ENCODE measurements at regions of chr7 and their contacts with region 1.

Region 1: GRCh38 chr7:55629051-55629677 is 56.9 kb upstream of the VOPP1 start:
- H3K4me3 ChIP-seq: no peak overlapping the region
- H3K27ac ChIP-seq: no peak overlapping the region
- H3K4me1 ChIP-seq: no peaks in the 10 kb centered on the region
- CTCF ChIP-seq: no peak

Region 2: GRCh38 chr7:55618913-55619312 is 10.3 kb before region 1 on chr7:
- CTCF ChIA-PET with region 1: no interaction called
- POLR2A ChIA-PET with region 1: no interaction called
- H3K4me3 ChIP-seq: no peak overlapping the region
- H3K27ac ChIP-seq: no peak overlapping the region
- H3K4me1 ChIP-seq: no peaks in the 10 kb centered on the region
- CTCF ChIP-seq: no peak

Region 3: GRCh38 chr7:55641273-55641691 is 12.1 kb after region 1 on chr7:
- CTCF ChIA-PET with region 1: interaction called, 22 read pairs
- POLR2A ChIA-PET with region 1: no interaction called
- H3K4me3 ChIP-seq: no peak overlapping the region
- H3K27ac ChIP-seq: no peak overlapping the region
- H3K4me1 ChIP-seq: no peaks in the 10 kb centered on the region
- CTCF ChIP-seq: peak; percentile 50; the same call in 1 of the 2 replicates